A673 (cell line): ENCODE measurements at regions of chrX and their contacts with region 1.

Region 1: GRCh38 chrX:5113128-5113527 is 1115.5 kb downstream of the NLGN4X start:
- DNase-seq: peak; percentile 49
- H3K4me3 ChIP-seq: no peak overlapping the region
- H3K27ac ChIP-seq: no peak overlapping the region
- H3K4me1 ChIP-seq: peaks cover 9% of the 10 kb centered on the region
- H3K27me3 ChIP-seq: no peaks in the 10 kb centered on the region
- CTCF ChIP-seq: peak; percentile 60

Region 2: DNA sequence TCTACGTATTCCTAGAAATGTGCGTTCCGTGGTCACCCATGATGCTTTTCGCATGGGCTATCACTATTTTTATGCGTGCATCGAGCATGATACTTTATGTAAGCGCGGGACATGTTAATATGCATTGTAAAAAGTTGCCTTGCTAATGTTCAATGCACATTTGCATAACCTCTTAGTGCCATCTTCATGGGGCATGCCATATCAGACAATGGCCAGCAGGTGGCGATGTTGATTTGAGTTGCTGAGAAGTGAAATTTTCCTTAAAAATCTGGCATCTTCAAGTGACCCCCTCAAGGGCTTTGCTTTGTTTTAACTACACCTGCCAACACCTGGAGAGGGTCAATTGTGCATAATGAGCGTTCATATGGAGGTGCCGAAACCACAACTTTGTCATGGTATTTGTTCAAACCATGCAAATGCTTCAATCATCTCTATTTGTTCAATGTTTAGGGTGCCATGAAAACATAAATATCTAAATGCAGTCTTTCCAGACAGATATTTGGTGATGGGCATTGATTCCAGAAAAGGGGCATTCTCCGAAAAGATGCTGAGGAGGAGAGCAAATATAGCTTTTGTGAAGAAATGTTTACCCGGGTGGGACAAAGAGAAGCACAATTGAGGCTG is 565.8 kb before region 1 on chrX:
- CTCF ChIA-PET with region 1: no interaction called
- POLR2A ChIA-PET with region 1: no interaction called
- intact Hi-C with region 1: loop called (anchors 2 kb)
- DNase-seq: peak; percentile 82
- H3K4me3 ChIP-seq: no peak overlapping the region
- H3K27ac ChIP-seq: no peak overlapping the region
- H3K4me1 ChIP-seq: peaks cover 21% of the 10 kb centered on the region
- H3K27me3 ChIP-seq: no peaks in the 10 kb centered on the region
- CTCF ChIP-seq: peak; percentile 90

Region 3: DNA sequence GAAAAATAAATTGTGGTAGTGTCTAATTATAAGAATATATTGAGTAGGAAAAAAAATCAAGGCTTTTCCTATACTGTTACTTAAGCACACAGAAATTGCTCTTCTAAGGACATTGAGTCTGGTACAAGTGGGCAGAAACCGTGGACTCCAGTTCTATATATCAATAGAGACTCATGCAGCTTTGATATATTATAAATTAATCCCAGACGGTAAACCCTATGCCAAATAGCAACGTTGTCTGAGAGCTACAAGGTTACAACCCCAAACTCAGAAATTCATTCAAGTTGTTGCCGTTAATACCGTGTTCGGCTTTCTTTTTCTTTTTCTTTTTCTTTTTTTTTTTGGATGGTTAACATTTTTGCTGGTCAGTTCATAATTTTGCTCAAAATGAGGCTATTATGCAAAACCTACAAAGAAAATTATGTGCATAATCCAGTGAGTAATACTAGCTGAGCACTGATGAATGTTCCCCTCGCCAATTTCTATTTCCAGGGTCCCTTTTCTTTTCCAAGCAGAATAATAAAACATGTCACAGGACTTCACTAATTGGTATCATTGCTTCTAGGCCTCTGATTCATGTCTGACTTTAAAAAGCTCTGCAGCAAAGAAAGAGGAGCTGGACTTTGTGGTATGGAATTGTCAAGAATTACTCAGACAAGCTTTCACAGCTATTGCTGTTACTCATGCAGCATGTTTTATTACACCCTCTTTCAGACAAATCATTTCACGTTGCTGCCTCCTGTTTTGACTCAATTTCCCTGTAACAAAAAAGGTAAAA is 377.8 kb after region 1 on chrX:
- CTCF ChIA-PET with region 1: no interaction called
- POLR2A ChIA-PET with region 1: no interaction called
- intact Hi-C with region 1: no loop called
- DNase-seq: peak; percentile 2
- H3K4me3 ChIP-seq: no peak overlapping the region
- H3K27ac ChIP-seq: no peak overlapping the region
- H3K4me1 ChIP-seq: no peaks in the 10 kb centered on the region
- H3K27me3 ChIP-seq: no peaks in the 10 kb centered on the region
- CTCF ChIP-seq: no peak